PC-9 (cell line): ENCODE measurements at regions of chr19 and their contacts with region 1.

Region 1: DNA sequence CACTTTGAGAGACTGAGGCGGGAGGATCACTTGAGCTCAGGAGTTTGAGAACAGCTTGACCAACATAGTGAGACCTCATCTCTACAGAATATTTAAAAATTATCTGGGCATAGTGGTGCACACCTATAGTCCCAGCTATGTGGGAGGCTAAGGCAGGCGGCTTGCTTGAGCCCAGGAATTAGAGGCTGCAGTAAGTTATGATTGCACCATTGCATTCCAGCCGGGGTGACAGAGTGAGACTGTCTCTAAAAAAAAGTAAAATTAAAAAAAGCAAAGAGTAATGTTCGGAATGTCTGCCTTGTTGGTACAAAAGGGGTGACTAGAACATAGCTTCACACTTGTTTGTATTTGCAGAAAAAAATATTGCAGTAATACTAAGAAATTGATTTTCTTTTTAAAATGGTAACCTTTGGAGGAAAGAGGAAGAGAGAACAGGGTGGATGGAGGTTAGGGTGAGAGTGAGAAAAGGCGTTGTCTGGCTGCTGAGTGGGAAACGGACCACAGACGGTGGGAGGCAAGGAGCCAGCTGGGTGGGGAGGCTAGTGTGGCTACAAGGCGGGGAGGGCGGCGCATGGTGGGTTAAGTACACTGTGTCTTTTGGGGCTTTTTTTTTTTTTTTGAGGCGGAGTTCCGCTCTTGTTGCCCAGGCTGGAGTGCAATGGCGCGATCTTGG is 10.2 kb downstream of the PPP1R14A start:
- DNase-seq: no peak
- H3K4me3 ChIP-seq: no peak overlapping the region
- H3K27ac ChIP-seq: no peak overlapping the region
- H3K4me1 ChIP-seq: peaks cover 7% of the 10 kb centered on the region
- H3K27me3 ChIP-seq: no peaks in the 10 kb centered on the region
- CTCF ChIP-seq: no peak

Region 2: GRCh38 chr19:37893845-37894575 is 352.0 kb before region 1 on chr19:
- CTCF ChIA-PET with region 1: interaction called, 10 read pairs
- POLR2A ChIA-PET with region 1: no interaction called
- intact Hi-C with region 1: no loop called
- DNase-seq: no peak
- H3K4me3 ChIP-seq: no peak overlapping the region
- H3K27ac ChIP-seq: no peak overlapping the region
- H3K4me1 ChIP-seq: no peaks in the 10 kb centered on the region
- H3K27me3 ChIP-seq: peaks cover 68% of the 10 kb centered on the region
- CTCF ChIP-seq: no peak

Region 3: DNA sequence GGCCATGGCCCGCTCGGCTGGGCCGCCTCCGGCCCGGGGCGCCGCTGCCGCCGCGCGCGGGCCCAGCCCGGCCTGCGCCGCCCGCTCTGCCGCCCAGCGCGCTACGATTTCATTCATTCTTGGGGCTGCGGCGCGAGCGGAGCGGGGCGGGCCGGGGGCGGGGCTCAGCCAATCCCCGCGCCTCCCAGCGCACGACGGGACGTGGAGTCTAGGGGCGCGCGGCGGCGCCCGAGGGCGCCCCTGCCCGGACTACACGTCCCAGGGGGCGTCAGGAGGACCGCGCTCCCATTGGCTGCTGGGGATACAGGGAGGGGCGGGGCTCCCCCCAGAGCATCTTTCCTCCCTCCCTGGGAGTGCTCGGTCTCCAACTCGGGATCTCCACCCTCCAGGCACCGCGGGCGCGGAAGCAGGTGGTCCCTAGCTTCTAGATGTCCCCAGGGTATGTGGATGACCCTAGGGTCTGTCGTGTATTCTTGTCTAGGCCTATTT is 16.3 kb before region 1 on chr19:
- CTCF ChIA-PET with region 1: interaction called, 18 read pairs
- POLR2A ChIA-PET with region 1: no interaction called
- intact Hi-C with region 1: no loop called
- DNase-seq: peak in 1 of 2 experiments; percentile 56
- H3K4me3 ChIP-seq: no peak overlapping the region
- H3K27ac ChIP-seq: no peak overlapping the region
- H3K4me1 ChIP-seq: 0 out of 2 replicates have a peak, but pooled peaks cover 6% of the 10 kb centered on the region
- H3K27me3 ChIP-seq: peaks cover 14% of the 10 kb centered on the region; the same call in 1 of the 2 replicates
- CTCF ChIP-seq: no peak

Region 4: GRCh38 chr19:38304866-38305429 is 59.0 kb after region 1 on chr19:
- CTCF ChIA-PET with region 1: no interaction called
- POLR2A ChIA-PET with region 1: interaction called, 10 read pairs
- intact Hi-C with region 1: loop called (anchors 2 kb)
- DNase-seq: peak; percentile 95 to 98
- H3K4me3 ChIP-seq: peak overlapping the region; percentile 72
- H3K27ac ChIP-seq: peak overlapping the region; percentile 94
- H3K4me1 ChIP-seq: peaks cover 33% of the 10 kb centered on the region
- H3K27me3 ChIP-seq: no peaks in the 10 kb centered on the region
- CTCF ChIP-seq: no peak

Region 5: GRCh38 chr19:38445362-38445761 is 199.4 kb after region 1 on chr19:
- CTCF ChIA-PET with region 1: interaction called, 16 read pairs
- POLR2A ChIA-PET with region 1: no interaction called
- intact Hi-C with region 1: no loop called
- DNase-seq: no peak
- H3K4me3 ChIP-seq: no peak overlapping the region
- H3K27ac ChIP-seq: no peak overlapping the region
- H3K4me1 ChIP-seq: no peaks in the 10 kb centered on the region
- H3K27me3 ChIP-seq: peaks cover 44% of the 10 kb centered on the region
- CTCF ChIP-seq: no peak